ENCODE measurements at regions of chr7 and their contacts with region 1.

Region 1: GRCh38 chr7:24812310-24812945 is 55.2 kb upstream of the GSDME start:
- DNase-seq: no peak
- H3K4me3 ChIP-seq: no peak overlapping the region
- H3K27ac ChIP-seq: no peak overlapping the region
- H3K27me3 ChIP-seq: no peaks in the 10 kb centered on the region
- CTCF ChIP-seq: peak; percentile 90

Region 2: DNA sequence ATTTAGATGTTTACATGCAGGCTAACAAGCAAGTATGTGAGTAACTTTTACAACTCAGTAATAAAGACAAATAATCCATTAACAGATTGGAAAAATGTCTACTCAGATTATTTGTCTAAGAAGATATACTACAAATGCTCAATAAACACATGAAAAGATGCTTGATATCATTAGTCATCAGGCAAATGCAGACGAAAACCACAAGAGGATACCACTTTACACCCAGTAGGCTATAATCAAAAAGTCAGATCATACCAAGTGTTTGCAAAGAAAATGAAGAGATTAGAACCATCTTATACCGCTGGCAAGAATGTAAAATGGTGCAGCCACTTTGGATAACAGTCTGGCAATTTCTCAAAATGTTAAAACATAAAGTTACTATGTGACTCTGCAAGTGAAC is 1429.2 kb before region 1 on chr7:
- CTCF ChIA-PET with region 1: no interaction called
- POLR2A ChIA-PET with region 1: no interaction called
- DNase-seq: no peak
- H3K4me3 ChIP-seq: no peak overlapping the region
- H3K27ac ChIP-seq: no peak overlapping the region
- H3K27me3 ChIP-seq: no peaks in the 10 kb centered on the region
- CTCF ChIP-seq: no peak

Region 3: DNA sequence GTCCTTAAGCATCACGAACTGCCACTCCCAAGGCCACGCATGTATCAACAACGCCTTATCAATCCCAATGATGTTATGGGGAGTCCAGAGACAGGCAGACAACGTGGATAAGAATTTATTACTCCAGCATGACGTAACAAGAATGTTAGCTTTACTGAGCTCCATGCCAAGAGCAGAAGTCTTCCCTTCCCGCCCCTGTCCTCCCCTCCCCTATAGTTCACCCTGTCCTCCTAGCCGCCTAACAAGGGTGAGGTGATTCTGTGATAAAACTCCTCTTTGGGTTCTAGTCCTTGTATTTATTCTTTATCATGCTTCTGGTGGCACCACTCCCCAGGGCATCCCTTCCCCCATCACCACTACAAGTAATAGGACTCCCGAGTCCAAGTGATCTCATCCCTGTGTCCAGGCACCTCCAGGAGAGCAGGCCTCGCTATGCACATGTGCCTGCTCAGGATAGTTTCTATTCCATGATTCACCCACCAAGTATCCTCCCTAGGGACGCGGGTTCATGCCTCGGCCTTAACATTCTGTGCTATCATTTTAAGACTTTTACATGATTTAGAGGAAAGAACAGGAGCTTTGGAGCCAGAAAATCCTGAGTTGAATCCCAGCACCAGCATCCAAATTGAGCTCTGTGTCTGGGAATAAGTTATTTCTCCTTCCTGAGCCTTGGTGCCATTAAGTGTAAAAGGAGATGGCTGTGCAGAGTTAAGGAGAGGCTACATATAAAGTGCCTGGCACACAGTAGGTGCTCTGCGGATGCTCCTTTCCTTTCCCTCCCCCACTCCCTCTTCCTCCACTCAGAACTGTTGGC is 70.5 kb before region 1 on chr7:
- CTCF ChIA-PET with region 1: interaction called, 13 read pairs
- POLR2A ChIA-PET with region 1: interaction called, 3 read pairs
- DNase-seq: peak; percentile 80
- H3K4me3 ChIP-seq: no peak overlapping the region
- H3K27ac ChIP-seq: peak overlapping the region; percentile 90
- H3K27me3 ChIP-seq: no peaks in the 10 kb centered on the region
- CTCF ChIP-seq: no peak

Region 4: DNA sequence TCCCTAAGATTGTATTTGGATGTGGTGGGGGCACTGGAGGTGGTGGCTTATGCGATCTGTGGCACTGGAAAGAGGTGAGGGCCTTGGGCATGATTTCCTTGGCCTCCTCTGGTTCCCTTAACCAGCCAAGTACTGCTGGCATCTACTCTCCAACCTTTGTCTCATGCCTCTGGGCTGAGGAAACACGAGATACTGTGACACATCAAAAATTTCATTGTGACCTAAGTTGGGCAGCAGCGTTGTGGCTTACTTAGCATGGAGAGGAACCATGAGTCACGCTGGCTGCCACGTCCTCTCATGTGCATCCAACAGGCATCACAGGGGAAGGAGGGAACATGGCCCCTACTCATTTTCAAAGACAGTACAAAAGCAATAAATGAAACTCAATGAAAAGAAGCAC is 25.5 kb before region 1 on chr7:
- CTCF ChIA-PET with region 1: interaction called, 13 read pairs
- POLR2A ChIA-PET with region 1: no interaction called
- DNase-seq: peak; percentile 81
- H3K4me3 ChIP-seq: no peak overlapping the region
- H3K27ac ChIP-seq: peak overlapping the region; percentile 86
- H3K27me3 ChIP-seq: no peaks in the 10 kb centered on the region
- CTCF ChIP-seq: no peak

Region 5: DNA sequence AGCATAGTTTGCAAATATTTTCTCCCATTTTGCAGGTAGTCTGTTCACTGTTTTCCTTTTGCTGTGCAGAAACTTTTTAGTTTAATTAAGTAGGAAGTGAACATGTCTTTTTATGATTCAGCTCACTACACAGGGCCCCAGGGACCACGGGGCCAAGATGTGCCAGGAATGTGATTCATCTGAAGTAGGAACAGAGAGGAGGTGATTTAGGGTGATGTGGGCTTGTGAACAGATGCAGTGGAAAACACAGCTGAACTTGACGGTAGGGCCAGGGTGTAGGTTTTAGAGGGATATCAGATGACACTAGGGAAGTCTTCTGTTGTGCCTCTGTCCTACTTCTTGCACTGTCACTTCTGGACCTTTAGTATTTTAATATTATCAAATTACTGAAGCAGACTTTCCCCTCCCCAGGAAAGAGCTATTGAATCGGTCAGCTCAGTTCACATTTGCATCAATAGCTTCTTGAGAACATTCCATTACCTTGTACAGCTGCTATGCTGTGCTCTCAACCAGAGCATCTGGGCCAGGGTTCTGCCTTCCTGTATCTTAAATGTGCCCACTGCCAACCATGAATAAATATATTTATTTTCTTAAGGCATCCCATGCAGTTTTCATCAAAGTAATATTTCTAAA is 70.7 kb after region 1 on chr7:
- CTCF ChIA-PET with region 1: interaction called, 13 read pairs
- POLR2A ChIA-PET with region 1: no interaction called
- DNase-seq: peak; percentile 33
- H3K4me3 ChIP-seq: no peak overlapping the region
- H3K27ac ChIP-seq: no peak overlapping the region
- H3K27me3 ChIP-seq: no peaks in the 10 kb centered on the region
- CTCF ChIP-seq: no peak

Region 6: GRCh38 chr7:24972991-24973390 is 160.6 kb after region 1 on chr7:
- CTCF ChIA-PET with region 1: interaction called, 36 read pairs
- POLR2A ChIA-PET with region 1: no interaction called
- DNase-seq: peak; percentile 54
- H3K4me3 ChIP-seq: no peak overlapping the region
- H3K27ac ChIP-seq: no peak overlapping the region
- H3K27me3 ChIP-seq: no peaks in the 10 kb centered on the region
- CTCF ChIP-seq: no peak

Region 7: DNA sequence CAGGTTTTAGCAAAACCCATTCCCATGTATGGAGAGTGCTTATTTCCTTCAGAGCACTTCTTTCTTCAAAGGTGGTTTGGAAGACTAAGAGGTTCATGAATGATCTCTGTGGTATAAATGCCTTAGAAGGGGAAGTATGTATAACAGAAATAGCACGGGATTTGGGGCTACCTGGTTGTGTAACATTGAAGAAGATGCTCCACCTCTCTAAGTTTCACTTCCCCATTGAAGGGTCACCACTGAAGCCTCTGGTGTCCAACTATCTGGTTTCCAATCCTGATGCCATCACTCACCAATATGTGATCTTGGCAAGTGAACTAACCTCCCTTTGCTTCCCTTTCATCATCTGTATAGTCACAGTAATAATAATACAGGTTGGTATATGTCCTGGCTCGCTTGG is 275.4 kb after region 1 on chr7:
- CTCF ChIA-PET with region 1: interaction called, 328 read pairs
- POLR2A ChIA-PET with region 1: no interaction called
- DNase-seq: no peak
- H3K4me3 ChIP-seq: no peak overlapping the region
- H3K27ac ChIP-seq: no peak overlapping the region
- H3K27me3 ChIP-seq: no peaks in the 10 kb centered on the region
- CTCF ChIP-seq: no peak

Measured in AG04450 (cell line).